ENCODE measurements at regions of chr17 and their contacts with region 1.

Region 1: GRCh38 chr17:47810205-47810821 is 11.3 kb downstream of the OSBPL7 start:
- DNase-seq: peak; percentile 40
- H3K4me3 Mint-ChIP-seq: no peak overlapping the region
- H3K27ac Mint-ChIP-seq: peak overlapping the region; percentile 46
- H3K4me1 Mint-ChIP-seq: peaks cover 21% of the 10 kb centered on the region
- H3K27me3 Mint-ChIP-seq: no peaks in the 10 kb centered on the region

Region 2: GRCh38 chr17:47831003-47831933 is 21.0 kb after region 1 on chr17 and contains the starts of genes LRRC46 and MRPL10:
- CTCF ChIA-PET with region 1: no interaction called
- POLR2A ChIA-PET with region 1: interaction called, 15 read pairs
- DNase-seq: peak; percentile 94
- H3K4me3 Mint-ChIP-seq: peak within 1 kb of the TSS; percentile 90
- H3K27ac Mint-ChIP-seq: peak within 1 kb of the TSS; percentile 100
- H3K4me1 Mint-ChIP-seq: peaks cover 69% of the 10 kb centered on the region
- H3K27me3 Mint-ChIP-seq: no peaks in the 10 kb centered on the region
- total RNA-seq, gene LRRC46: 0.45 to 0.53 TPM
- total RNA-seq, gene MRPL10: 91.5 to 95.7 TPM

Region 3: DNA sequence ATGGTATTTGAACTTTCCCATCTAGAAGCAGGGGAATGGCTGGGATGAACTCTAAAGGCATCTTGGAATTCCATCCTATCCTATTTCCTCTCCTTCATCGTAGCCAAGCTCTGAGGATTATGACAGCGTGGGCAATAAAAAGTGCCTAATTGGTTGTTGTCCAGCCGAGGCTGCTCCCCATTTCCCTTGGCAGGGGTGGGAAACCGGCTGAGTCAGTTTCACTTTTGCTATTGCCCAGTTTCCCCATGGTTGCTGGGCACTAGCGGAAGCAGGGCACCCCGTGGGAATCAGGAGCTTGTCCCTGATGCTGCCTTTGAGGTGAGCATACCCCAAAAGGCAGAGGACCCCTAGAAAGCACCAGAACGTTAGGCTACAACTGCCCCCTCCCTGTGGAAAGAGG is 71.9 kb after region 1 on chr17:
- CTCF ChIA-PET with region 1: no interaction called
- POLR2A ChIA-PET with region 1: no interaction called
- DNase-seq: no peak
- H3K4me3 Mint-ChIP-seq: no peak overlapping the region
- H3K27ac Mint-ChIP-seq: no peak overlapping the region
- H3K4me1 Mint-ChIP-seq: peaks cover 21% of the 10 kb centered on the region
- H3K27me3 Mint-ChIP-seq: peaks cover 19% of the 10 kb centered on the region